Sciatic nerve (tissue), 2 donors: ENCODE measurements at regions of chr4 and their contacts with region 1.

Region 1: DNA sequence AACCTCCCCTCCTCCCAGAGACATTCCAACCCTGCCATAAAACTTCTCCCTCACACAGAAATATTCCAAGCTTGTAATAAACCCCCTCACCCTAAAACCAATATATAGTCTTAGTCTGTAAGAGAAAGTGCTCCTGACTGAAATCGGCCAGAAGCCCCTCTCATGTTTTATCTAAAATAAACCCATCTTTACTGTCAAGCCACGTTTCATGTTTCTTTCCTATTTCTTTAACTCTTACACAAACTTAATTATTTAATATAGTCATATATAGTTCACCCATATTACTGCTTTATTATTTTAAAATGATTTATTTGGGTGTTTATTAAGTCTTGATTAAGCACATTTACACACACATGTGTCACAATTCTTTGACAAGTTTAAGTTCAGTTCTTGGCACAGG is 191.3 kb upstream of the AADAT start:
- DNase-seq: no peak
- ATAC-seq: no peak

Region 2: DNA sequence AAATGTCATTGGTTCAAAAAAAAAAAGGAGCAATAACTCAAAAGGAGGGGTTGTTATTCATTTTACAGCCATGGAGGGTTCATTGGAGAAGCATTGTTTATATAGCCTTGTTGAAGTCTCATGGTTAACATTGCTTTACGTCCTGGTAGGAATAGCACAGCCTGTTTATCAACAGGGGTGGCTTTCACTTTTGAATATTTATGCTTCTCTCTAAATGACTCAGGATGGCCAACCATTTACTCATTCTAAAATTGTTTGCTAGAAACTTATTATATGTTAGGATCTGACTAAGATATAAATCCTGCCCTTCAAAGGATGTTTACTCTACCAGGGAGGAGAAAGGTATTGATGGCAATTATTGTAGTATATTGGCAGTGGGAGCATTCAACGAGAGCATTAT is 998.1 kb after region 1 on chr4:
- intact Hi-C with region 1: loop called (anchors 5 kb)
- DNase-seq: no peak
- ATAC-seq: no peak